AG04449 (cell line): ENCODE measurements at regions of chr6 and their contacts with region 1.

Region 1: GRCh38 chr6:35139908-35140655 is 1.1 kb downstream of the TCP11 start:
- DNase-seq: peak; percentile 41
- H3K4me3 ChIP-seq: no peak overlapping the region
- CTCF ChIP-seq: peak; percentile 58

Region 2: GRCh38 chr6:34887753-34888513 is 252.1 kb before region 1 on chr6 and contains the start of gene TAF11:
- CTCF ChIA-PET with region 1: interaction called, 21 read pairs
- POLR2A ChIA-PET with region 1: no interaction called
- DNase-seq: peak; percentile 79
- H3K4me3 ChIP-seq: peak within 1 kb of the TSS; percentile 95
- CTCF ChIP-seq: no peak

Region 3: GRCh38 chr6:34973547-34974248 is 166.4 kb before region 1 on chr6:
- CTCF ChIA-PET with region 1: interaction called, 309 read pairs
- POLR2A ChIA-PET with region 1: no interaction called
- DNase-seq: no peak
- H3K4me3 ChIP-seq: no peak overlapping the region
- CTCF ChIP-seq: no peak

Region 4: DNA sequence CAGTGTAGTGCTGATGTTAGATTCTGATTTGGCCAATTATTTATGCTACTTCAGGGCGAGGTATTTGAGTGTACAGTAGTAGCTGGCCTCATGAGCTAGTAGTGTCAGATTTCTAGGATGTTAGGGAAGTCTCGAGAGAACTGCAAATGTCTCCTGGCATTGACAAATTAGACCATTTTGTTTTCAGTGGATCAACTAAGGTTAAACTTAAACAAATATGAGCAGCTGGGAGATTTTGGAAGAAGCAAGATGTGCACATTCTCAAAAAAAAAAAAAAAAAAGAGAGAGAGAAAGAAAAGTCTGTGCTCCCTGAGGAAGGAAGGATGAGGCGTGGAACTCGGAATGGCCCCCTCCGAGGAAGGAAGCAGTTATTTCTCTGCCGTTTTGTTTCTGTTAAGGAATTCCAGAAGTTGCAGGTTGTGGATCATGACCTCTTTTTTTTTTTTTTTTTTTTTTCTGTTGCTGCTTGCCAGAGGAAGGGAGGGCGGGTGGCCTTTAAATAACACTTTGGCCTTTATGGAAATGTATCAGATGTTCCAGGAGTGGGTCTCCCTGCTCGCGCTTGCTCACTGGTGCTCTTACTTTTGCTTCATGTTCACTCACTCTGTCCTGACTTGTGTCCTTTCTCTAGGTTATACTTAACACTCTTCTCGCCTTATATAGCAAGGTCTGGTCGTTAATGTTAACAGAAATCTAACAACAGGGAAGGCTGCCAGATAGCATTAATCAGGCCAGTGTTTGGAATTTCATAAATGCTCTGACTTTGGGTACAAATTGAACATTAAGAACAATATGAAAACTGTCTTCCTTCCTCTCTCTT is 123.4 kb before region 1 on chr6:
- CTCF ChIA-PET with region 1: interaction called, 10 read pairs
- POLR2A ChIA-PET with region 1: no interaction called
- DNase-seq: no peak
- H3K4me3 ChIP-seq: peak overlapping the region; percentile 28
- CTCF ChIP-seq: no peak

Region 5: GRCh38 chr6:35120746-35121145 is 19.3 kb before region 1 on chr6:
- CTCF ChIA-PET with region 1: interaction called, 11 read pairs
- POLR2A ChIA-PET with region 1: no interaction called
- DNase-seq: no peak
- H3K4me3 ChIP-seq: no peak overlapping the region
- CTCF ChIP-seq: no peak

Region 6: DNA sequence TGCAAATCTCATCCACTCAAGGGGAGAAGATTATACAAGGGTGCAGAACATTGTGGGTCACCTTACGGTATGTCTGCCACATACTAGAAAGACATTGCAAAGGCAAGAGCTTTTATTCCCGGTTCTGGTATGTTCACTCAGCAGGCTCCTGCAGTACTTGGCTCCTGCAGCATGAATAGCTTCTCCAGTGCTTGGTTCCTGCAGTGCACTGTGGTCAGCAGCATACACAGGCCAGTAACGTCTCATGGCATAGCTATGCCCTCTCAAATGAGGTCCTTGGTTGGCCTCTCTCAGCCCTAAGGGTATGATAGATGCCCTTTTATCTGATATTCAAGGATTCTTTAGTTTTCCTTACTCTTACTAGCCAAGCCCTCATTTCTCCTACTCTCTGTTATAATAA is 11.6 kb before region 1 on chr6:
- CTCF ChIA-PET with region 1: interaction called, 34 read pairs
- POLR2A ChIA-PET with region 1: no interaction called
- DNase-seq: peak; percentile 24
- H3K4me3 ChIP-seq: no peak overlapping the region
- CTCF ChIP-seq: no peak

Region 7: DNA sequence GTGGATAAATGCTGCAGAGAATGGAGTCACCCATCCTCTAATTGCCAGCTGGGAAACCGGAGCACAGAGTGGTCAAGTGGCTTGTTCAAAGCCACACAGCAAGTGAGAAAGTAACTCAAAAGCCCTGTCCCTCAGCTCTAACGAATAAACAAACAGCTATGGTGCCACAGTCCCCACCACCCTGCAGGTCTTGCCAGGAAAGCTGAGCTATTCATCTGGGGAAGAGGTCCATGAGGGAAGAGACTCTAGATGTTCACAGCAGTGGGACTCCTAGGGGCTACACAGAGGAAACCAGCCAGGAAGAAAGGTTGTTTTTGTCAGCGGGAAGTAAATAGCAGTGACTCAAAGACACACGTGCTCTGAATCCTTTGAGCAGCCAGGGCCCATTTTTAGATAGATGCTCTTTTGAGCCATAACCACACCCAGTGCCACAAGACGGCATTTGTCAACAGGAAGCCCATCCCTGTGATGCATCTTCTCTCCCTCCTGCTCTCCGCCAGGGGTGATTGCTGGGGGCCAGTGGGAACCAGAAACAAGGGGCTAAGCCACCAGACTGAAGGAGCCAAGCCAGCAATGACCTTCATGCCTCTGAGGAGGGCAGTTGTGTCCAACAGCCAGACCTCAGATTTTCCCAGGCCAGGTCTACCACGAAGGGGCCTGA is 33.5 kb after region 1 on chr6:
- CTCF ChIA-PET with region 1: no interaction called
- POLR2A ChIA-PET with region 1: no interaction called
- DNase-seq: no peak
- H3K4me3 ChIP-seq: no peak overlapping the region
- CTCF ChIP-seq: no peak

Region 8: GRCh38 chr6:35230950-35231349 is 90.9 kb after region 1 on chr6:
- CTCF ChIA-PET with region 1: interaction called, 340 read pairs
- POLR2A ChIA-PET with region 1: no interaction called
- DNase-seq: no peak
- H3K4me3 ChIP-seq: no peak overlapping the region
- CTCF ChIP-seq: no peak

Region 9: DNA sequence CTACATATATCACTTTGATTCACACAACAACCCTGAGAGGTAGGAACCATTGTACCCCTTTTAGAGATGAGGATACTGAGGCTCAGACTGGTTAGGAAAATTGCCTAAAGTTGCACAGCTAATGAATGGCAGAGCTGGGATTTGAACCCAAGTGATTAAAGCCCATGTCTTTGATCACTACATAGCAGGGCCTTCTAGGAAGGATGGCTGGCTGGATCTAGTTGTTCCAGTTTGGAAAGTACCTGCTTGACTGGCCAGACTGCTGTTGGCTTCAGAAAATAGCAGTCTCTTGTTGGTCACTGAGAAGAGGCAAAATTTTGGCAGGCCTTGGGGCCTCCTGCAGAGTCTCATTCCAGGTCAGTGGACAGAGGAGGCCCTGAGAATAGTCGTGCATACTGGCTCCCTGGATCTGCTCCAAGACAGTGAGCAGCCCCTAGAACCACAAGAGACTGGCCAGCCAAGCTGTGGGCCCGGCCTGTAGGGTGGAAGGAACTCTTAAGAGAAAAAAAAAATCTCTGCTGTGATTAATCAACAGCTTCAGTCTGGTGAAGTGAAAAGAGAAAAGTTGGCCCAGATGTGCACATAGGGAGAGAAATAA is 219.8 kb after region 1 on chr6:
- CTCF ChIA-PET with region 1: no interaction called
- POLR2A ChIA-PET with region 1: no interaction called
- DNase-seq: peak; percentile 73
- H3K4me3 ChIP-seq: no peak overlapping the region
- CTCF ChIP-seq: no peak